Mammary epithelial cell (primary cell): ENCODE measurements at regions of chr2 and their contacts with region 1.

Region 1: GRCh38 chr2:47664817-47665216 is 118.1 kb upstream of the MSH6 start:
- DNase-seq: peak; percentile 19
- H3K4me3 ChIP-seq: no peak overlapping the region
- H3K27ac ChIP-seq: no peak overlapping the region
- H3K4me1 ChIP-seq: no peaks in the 10 kb centered on the region
- H3K27me3 ChIP-seq: no peaks in the 10 kb centered on the region
- CTCF ChIP-seq: peak; percentile 15 to 61

Region 2: GRCh38 chr2:47437287-47437686 is 227.5 kb before region 1 on chr2:
- CTCF ChIA-PET with region 1: no interaction called
- dilution Hi-C with region 1: no loop called
- in situ Hi-C with region 1: no loop called
- intact Hi-C with region 1: loop called (anchors 5 kb)
- DNase-seq: no peak
- H3K4me3 ChIP-seq: no peak overlapping the region
- H3K27ac ChIP-seq: no peak overlapping the region
- H3K4me1 ChIP-seq: no peaks in the 10 kb centered on the region
- H3K27me3 ChIP-seq: no peaks in the 10 kb centered on the region
- CTCF ChIP-seq: peak; percentile 19 to 52

Region 3: GRCh38 chr2:47617028-47617427 is 47.8 kb before region 1 on chr2:
- CTCF ChIA-PET with region 1: no interaction called
- dilution Hi-C with region 1: no loop called
- in situ Hi-C with region 1: no loop called
- intact Hi-C with region 1: no loop called
- DNase-seq: no peak
- H3K4me3 ChIP-seq: no peak overlapping the region
- H3K27ac ChIP-seq: no peak overlapping the region
- H3K4me1 ChIP-seq: no peaks in the 10 kb centered on the region
- H3K27me3 ChIP-seq: no peaks in the 10 kb centered on the region
- CTCF ChIP-seq: no peak